A673 (cell line): ENCODE measurements at regions of chr3 and their contacts with region 1.

Region 1: GRCh38 chr3:89113903-89114840 is 6.8 kb downstream of the EPHA3 start:
- DNase-seq: peak; percentile 80
- H3K4me3 ChIP-seq: peak overlapping the region; percentile 48
- H3K27ac ChIP-seq: peak overlapping the region; percentile 79
- H3K4me1 ChIP-seq: peaks cover 64% of the 10 kb centered on the region
- H3K27me3 ChIP-seq: no peaks in the 10 kb centered on the region
- CTCF ChIP-seq: peak; percentile 71

Region 2: DNA sequence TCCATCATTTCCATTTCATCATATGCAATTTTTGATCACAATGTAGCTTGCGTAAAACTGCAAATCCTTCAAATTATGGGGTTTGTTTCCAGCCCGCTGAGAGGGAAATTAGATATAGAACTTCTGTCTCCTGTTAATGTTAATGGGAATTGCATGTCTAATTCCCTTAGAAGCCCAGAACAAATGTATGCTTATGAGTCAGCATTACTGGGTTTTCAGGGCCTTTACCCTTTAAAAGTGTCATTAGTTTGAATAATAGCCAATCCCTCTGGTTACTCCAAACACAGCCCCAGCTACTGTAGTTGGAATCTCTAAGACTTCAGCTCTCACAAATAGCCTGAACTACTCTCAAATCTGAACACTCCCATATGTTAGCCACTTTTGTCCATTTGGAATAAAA is 525.0 kb before region 1 on chr3:
- CTCF ChIA-PET with region 1: no interaction called
- POLR2A ChIA-PET with region 1: interaction called, 13 read pairs
- intact Hi-C with region 1: no loop called
- DNase-seq: peak; percentile 92
- H3K4me3 ChIP-seq: no peak overlapping the region
- H3K27ac ChIP-seq: peak overlapping the region; percentile 85
- H3K4me1 ChIP-seq: peaks cover 38% of the 10 kb centered on the region
- H3K27me3 ChIP-seq: no peaks in the 10 kb centered on the region
- CTCF ChIP-seq: no peak

Region 3: GRCh38 chr3:88991496-88991895 is 122.7 kb before region 1 on chr3:
- CTCF ChIA-PET with region 1: interaction called, 16 read pairs
- POLR2A ChIA-PET with region 1: no interaction called
- intact Hi-C with region 1: no loop called
- DNase-seq: peak; percentile 16
- H3K4me3 ChIP-seq: no peak overlapping the region
- H3K27ac ChIP-seq: no peak overlapping the region
- H3K4me1 ChIP-seq: no peaks in the 10 kb centered on the region
- H3K27me3 ChIP-seq: no peaks in the 10 kb centered on the region
- CTCF ChIP-seq: no peak

Region 4: DNA sequence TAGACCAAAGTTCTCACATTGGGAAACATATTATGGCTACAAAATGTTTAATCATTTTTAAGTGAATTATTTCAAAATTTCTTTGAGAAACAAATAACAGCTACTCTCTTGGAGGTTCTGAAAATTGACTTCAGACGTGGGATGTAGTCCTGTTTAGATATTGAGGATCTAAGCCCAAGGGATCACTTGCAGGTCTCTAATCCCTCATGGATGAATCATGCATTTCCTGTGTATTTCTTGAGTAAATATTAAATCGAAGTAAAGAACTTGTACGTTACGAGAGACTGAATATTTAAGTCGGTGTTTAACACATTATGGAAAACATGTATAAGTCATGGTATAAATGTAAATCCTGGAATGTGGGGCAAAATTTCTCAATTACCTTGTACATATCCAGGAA is 113.0 kb after region 1 on chr3:
- CTCF ChIA-PET with region 1: no interaction called
- POLR2A ChIA-PET with region 1: no interaction called
- intact Hi-C with region 1: loop called (anchors 10 kb)
- DNase-seq: peak; percentile 84
- H3K4me3 ChIP-seq: no peak overlapping the region
- H3K27ac ChIP-seq: no peak overlapping the region
- H3K4me1 ChIP-seq: peaks cover 58% of the 10 kb centered on the region
- H3K27me3 ChIP-seq: no peaks in the 10 kb centered on the region
- CTCF ChIP-seq: no peak

Region 5: GRCh38 chr3:89303701-89304100 is 189.5 kb after region 1 on chr3:
- CTCF ChIA-PET with region 1: no interaction called
- POLR2A ChIA-PET with region 1: no interaction called
- intact Hi-C with region 1: loop called (anchors 10 kb)
- DNase-seq: no peak
- H3K4me3 ChIP-seq: no peak overlapping the region
- H3K27ac ChIP-seq: no peak overlapping the region
- H3K4me1 ChIP-seq: peaks cover 41% of the 10 kb centered on the region
- H3K27me3 ChIP-seq: no peaks in the 10 kb centered on the region
- CTCF ChIP-seq: no peak

Region 6: DNA sequence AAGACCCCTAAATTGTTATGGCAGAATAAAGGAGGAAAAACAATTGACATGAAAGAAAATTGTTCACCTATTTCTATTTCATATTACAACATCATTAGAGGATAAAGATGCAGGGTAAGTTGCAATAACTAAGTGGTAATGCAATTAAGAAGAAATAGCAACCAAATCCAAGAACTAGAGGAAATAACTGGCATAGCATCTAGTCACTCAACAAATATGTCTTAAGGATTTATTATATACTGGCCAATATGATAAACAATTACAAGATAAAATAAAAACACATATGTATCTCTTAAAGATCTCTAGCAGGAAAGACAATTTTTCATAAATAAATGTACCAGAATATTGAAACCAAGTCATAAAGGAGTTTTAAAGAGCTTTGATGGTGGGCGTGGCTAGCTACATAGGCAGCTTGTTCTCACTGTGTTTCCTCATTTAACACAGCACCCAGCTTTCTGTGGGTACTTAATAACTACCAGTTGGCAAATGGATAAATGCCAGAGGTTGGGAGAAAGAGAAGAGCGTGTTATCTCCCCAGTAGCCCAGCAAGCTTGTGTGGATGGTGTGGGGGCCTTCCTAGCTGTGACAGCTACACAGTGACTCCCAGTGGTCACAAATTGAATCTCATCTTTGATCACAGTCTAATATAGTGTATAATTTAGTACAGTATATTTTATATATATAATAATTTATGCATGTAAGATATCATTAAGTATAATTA is 977.2 kb after region 1 on chr3:
- CTCF ChIA-PET with region 1: no interaction called
- POLR2A ChIA-PET with region 1: no interaction called
- intact Hi-C with region 1: loop called (anchors 5 kb)
- DNase-seq: peak; percentile 89
- H3K4me3 ChIP-seq: no peak overlapping the region
- H3K27ac ChIP-seq: no peak overlapping the region
- H3K4me1 ChIP-seq: peaks cover 21% of the 10 kb centered on the region
- H3K27me3 ChIP-seq: no peaks in the 10 kb centered on the region
- CTCF ChIP-seq: peak; percentile 71